ENCODE measurements at regions of chr7 and their contacts with region 1.

Region 1: GRCh38 chr7:17706734-17707133 is 233.6 kb downstream of the SNX13 start:
- DNase-seq: peak; percentile 31 to 70 (median 45)
- ATAC-seq: peak; percentile 91
- H3K4me3 ChIP-seq: no peak overlapping the region
- H3K27ac ChIP-seq: no peak overlapping the region
- H3K4me1 ChIP-seq: no peaks in the 10 kb centered on the region
- H3K27me3 ChIP-seq: no peaks in the 10 kb centered on the region
- CTCF ChIP-seq: peak; percentile 60 to 74 (median 62)
- EP300 ChIP-seq: no peak
- POLR2A ChIP-seq: no peak
- RAD21 ChIP-seq: peak; percentile 73 to 85

Region 2: DNA sequence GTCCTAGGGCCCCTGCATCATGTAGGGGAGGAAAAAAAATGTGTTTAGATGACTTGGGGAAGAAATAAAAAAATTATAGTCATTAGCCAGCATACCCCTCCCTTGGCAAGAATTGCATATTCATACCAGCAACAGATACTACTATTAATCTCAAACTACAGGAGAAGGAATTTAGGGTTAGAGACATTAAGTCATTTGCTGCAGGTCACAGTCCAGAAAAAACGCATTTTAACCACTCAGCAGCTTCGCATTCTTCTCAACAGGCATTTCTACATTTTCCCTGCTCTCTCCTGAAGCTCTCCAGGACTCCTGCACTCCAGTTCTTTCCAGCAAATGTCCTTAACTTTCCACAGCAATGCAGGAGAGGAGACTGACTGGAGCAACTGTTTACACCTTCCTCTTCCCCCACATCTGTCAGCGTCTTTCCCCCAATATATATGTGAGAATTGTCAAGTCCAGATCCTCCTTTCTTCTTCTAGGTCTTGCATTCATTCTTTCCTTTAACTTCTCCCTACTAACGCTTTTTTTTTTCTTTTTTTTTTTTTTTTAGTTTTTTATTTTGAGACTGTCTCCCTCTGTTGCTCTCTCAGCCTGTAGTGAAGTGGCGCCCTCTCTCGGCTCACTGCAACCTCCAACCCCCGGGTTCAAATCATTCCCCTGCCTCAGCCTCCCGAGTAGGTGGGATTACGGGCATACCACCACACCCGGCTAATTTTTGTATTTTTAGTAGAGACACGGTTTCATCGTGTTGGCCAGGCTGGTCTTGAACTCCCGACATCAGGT is 285.3 kb after region 1 on chr7:
- CTCF ChIA-PET with region 1: no interaction called
- POLR2A ChIA-PET with region 1: no interaction called
- in situ Hi-C with region 1: no loop called
- intact Hi-C with region 1: loop called (anchors 2 kb)
- DNase-seq: peak in 1 of 4 experiments; percentile 45
- ATAC-seq: peak; percentile 88
- H3K4me3 ChIP-seq: no peak overlapping the region
- H3K27ac ChIP-seq: no peak overlapping the region
- H3K4me1 ChIP-seq: 0 out of 5 replicates have a peak, but pooled peaks cover 0 to 4% of the 10 kb centered on the region in 2 experiments
- H3K27me3 ChIP-seq: no peaks in the 10 kb centered on the region
- CTCF ChIP-seq: peak; percentile 47 to 60 (median 56)
- EP300 ChIP-seq: no peak
- POLR2A ChIP-seq: no peak
- RAD21 ChIP-seq: peak; percentile 18 to 42; a peak in 3 of 4 replicates

Region 3: GRCh38 chr7:18064242-18064838 is 357.6 kb after region 1 on chr7:
- CTCF ChIA-PET with region 1: no interaction called
- POLR2A ChIA-PET with region 1: no interaction called
- in situ Hi-C with region 1: no loop called
- intact Hi-C with region 1: loop called (anchors 5 kb)
- DNase-seq: peak; percentile 23 to 54 (median 30)
- ATAC-seq: peak; percentile 95
- H3K4me3 ChIP-seq: no peak overlapping the region
- H3K27ac ChIP-seq: no peak overlapping the region
- H3K4me1 ChIP-seq: no peaks in the 10 kb centered on the region; a peak in 1 of 5 replicates
- H3K27me3 ChIP-seq: no peaks in the 10 kb centered on the region
- CTCF ChIP-seq: peak; percentile 65 to 75 (median 72)
- EP300 ChIP-seq: no peak
- POLR2A ChIP-seq: no peak
- RAD21 ChIP-seq: peak; percentile 69 to 92

Region 4: GRCh38 chr7:19051767-19052375 is 1345.1 kb after region 1 on chr7:
- CTCF ChIA-PET with region 1: interaction called, 3 read pairs
- POLR2A ChIA-PET with region 1: no interaction called
- in situ Hi-C with region 1: no loop called
- intact Hi-C with region 1: loop called (anchors 10 kb)
- DNase-seq: peak; percentile 33 to 48 (median 38)
- ATAC-seq: peak; percentile 58; the same call in 1 of the 3 replicates
- H3K4me3 ChIP-seq: no peak overlapping the region
- H3K27ac ChIP-seq: no peak overlapping the region
- H3K4me1 ChIP-seq: no peaks in the 10 kb centered on the region
- H3K27me3 ChIP-seq: no peaks in the 10 kb centered on the region
- CTCF ChIP-seq: peak; percentile 46 to 55 (median 54)
- EP300 ChIP-seq: no peak
- POLR2A ChIP-seq: no peak
- RAD21 ChIP-seq: peak; percentile 32 to 37; a peak in 3 of 4 replicates